ENCODE measurements at regions of chr6 and their contacts with region 1.

Region 1: GRCh38 chr6:161273752-161274487 is at the start of gene AGPAT4:
- DNase-seq: peak; percentile 93
- H3K4me3 Mint-ChIP-seq: peak within 1 kb of the TSS; percentile 92
- H3K27ac Mint-ChIP-seq: peak within 1 kb of the TSS; percentile 95
- H3K4me1 Mint-ChIP-seq: peaks cover 26% of the 10 kb centered on the region
- H3K27me3 Mint-ChIP-seq: peaks cover 13% of the 10 kb centered on the region
- total RNA-seq, gene AGPAT4: 6.8 and 7.1 TPM in 2 replicates

Region 2: DNA sequence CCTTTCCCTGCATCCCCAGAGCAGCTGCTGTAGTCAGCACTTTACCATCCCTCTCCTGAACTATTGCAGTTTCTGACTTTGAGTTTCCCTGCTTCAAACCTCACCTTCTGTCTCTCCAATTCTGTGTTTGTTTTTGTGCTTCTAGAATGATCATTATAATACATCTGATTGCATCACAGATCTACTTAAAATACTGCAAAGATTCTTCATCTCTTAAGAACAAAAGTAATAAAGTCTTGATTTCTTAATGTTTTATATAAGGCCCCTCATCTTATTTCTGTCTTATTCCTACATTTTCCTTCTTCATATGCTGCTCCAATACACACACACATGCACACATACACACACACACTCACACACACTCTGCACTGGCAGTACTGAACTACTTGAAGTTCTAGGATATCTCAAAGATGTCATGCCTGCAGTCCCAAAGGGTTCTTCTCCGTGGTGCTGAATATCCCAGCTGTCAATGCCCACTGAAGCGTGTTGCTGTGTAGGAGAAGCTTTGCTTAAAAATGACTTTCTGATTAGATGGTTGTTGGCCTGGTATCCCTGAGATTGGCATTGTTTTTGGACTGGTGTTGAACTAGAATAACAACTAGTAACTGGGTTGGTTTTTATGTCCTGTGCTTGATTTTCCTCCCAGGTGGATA is 185.1 kb before region 1 on chr6:
- intact Hi-C with region 1: loop called (anchors 5 kb)
- DNase-seq: no peak
- H3K4me3 Mint-ChIP-seq: no peak overlapping the region
- H3K27ac Mint-ChIP-seq: no peak overlapping the region
- H3K4me1 Mint-ChIP-seq: peaks cover 6% of the 10 kb centered on the region
- H3K27me3 Mint-ChIP-seq: no peaks in the 10 kb centered on the region

Region 3: DNA sequence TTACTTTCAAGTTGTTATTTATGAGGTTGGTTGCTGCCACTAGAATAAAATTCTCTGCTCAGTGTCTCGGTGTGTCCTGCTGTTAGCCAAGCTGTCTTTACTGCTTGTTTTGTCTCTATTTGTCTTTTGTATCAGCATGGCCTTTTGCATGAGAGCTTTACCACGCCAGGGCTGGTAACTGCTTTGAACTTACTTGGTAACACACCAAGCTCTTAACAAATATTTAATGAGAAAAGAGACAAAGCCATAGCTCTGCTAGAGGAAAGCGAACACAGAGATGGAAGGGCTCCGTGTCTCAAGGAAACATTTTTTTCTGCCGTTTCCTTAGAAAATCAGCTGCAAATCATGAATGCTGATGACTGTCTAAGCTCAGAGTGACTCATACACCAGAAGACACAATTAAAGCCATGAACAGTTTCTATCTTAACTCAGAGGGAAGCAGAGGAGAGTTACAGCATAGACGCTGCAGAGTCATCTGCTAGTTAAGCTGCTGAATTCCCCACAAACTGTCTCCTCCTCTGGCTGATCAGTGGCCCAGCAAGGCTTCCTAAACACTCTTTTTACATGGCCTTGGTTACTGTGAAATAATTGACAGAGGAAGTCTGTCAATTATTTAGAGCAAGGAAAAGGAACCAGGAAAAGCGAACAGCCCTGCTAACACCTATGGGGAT is 44.9 kb before region 1 on chr6:
- intact Hi-C with region 1: loop called (anchors 1 kb)
- DNase-seq: peak; percentile 68
- H3K4me3 Mint-ChIP-seq: peak overlapping the region; percentile 67
- H3K27ac Mint-ChIP-seq: peak overlapping the region; percentile 71
- H3K4me1 Mint-ChIP-seq: peaks cover 48% of the 10 kb centered on the region
- H3K27me3 Mint-ChIP-seq: no peaks in the 10 kb centered on the region

Region 4: GRCh38 chr6:161498359-161498758 is 224.4 kb after region 1 on chr6:
- intact Hi-C with region 1: no loop called
- DNase-seq: no peak
- H3K4me3 Mint-ChIP-seq: no peak overlapping the region
- H3K27ac Mint-ChIP-seq: no peak overlapping the region
- H3K4me1 Mint-ChIP-seq: no peaks in the 10 kb centered on the region
- H3K27me3 Mint-ChIP-seq: no peaks in the 10 kb centered on the region

Region 5: GRCh38 chr6:162727309-162728182 is 1453.6 kb after region 1 on chr6 and contains the starts of genes PACRG and PRKN:
- intact Hi-C with region 1: loop called (anchors 5 kb)
- DNase-seq: peak; percentile 99
- H3K4me3 Mint-ChIP-seq: peak within 1 kb of the TSS; percentile 92
- H3K27ac Mint-ChIP-seq: peak within 1 kb of the TSS; percentile 91
- H3K4me1 Mint-ChIP-seq: peaks cover 6% of the 10 kb centered on the region
- H3K27me3 Mint-ChIP-seq: peaks cover 3% of the 10 kb centered on the region
- total RNA-seq, gene PACRG: not detected in 2 replicates
- total RNA-seq, gene PRKN: not detected in 2 replicates

Measured in activated CD4-positive, alpha-beta T cell treated with anti-CD3 and anti-CD28 coated beads, Interleukin-2, amount 10 ng/mL, durations not matched to agents 24 days and 14 days (primary cell).